ENCODE measurements at regions of chr14 and their contacts with region 1.

Region 1: DNA sequence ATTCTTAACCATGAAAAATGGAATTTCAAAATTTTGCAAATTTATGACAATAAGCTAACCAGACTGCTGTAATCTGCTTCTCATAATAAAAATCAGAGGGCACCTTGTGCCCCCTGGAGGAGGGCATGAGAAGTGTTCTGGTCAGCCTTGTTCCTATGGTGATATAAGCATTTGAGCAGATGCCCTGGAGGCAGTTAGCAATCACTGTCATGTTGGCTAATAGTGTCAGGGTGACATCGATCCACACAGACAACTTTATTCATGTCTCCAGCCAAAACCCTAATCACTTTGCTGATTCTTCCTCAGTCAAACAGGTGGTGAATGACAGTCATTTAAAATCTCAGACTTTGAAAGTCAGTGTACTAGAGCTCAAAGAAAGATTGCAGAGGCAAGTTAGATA is 943.0 kb downstream of the GALC start:
- DNase-seq: peak; percentile 2
- H3K4me3 ChIP-seq: no peak overlapping the region
- CTCF ChIP-seq: peak; percentile 59

Region 2: DNA sequence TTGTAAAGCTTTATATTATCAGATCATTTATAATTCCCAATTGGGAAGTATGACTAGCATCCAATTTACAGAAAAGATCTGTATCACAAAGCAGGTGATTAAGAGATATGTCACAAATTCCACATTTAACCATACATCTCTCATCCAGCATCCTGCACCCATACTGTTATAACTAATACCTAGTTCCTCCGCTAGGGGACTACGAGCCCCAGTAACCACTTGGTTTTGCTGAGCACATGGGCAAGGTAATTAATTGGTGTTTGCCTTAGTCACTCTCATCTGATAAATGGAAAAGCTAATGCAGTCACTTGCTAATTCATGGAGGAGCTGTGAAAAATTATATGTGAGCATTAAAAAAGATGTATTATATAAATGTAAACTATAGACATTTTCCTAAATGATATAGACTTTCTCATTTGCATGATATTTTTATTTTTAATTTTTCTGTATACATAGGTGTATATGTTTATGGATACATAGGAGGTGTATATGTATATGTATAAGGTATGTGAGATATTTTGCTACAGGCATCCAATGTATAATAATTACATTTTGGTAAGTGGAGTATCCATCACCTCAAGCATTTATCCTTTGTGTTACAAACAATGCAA is 88.7 kb before region 1 on chr14:
- CTCF ChIA-PET with region 1: interaction called, 13 read pairs
- POLR2A ChIA-PET with region 1: no interaction called
- DNase-seq: no peak
- H3K4me3 ChIP-seq: no peak overlapping the region
- CTCF ChIP-seq: peak; percentile 57